Lower lobe of right lung (tissue), 2 donors: ENCODE measurements at regions of chr11 and their contacts with region 1.

Region 1: DNA sequence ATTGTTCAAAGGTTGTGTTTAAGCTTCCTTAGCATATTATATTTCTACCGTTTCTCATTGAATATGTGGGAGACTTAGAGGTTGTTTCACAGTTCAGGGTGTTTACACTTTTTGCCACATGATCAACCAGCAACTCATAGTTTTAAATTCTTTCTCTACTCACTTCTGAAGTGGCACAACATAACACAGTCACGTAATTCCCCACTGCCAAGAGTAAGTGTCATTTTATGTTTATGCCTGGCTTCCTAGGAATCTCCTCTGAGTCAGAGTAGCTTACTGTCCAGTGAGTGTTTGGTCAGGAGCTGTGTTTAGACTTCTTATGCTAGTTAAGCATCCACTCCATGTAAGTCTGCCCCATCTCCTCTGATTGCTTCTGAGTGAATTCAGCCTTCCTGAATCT is 520.8 kb upstream of the KIRREL3 start:
- DNase-seq: no peak
- ATAC-seq: no peak
- H3K4me3 ChIP-seq: no peak overlapping the region
- H3K27ac ChIP-seq: no peak overlapping the region
- H3K4me1 ChIP-seq: no peaks in the 10 kb centered on the region
- H3K27me3 ChIP-seq: no peaks in the 10 kb centered on the region
- CTCF ChIP-seq: no peak

Region 2: GRCh38 chr11:127461241-127462064 is 60.0 kb before region 1 on chr11:
- intact Hi-C with region 1: loop called (anchors 10 kb)
- DNase-seq: no peak
- ATAC-seq: no peak
- H3K4me3 ChIP-seq: no peak overlapping the region
- H3K27ac ChIP-seq: no peak overlapping the region
- H3K4me1 ChIP-seq: no peaks in the 10 kb centered on the region
- H3K27me3 ChIP-seq: no peaks in the 10 kb centered on the region
- CTCF ChIP-seq: no peak

Region 3: DNA sequence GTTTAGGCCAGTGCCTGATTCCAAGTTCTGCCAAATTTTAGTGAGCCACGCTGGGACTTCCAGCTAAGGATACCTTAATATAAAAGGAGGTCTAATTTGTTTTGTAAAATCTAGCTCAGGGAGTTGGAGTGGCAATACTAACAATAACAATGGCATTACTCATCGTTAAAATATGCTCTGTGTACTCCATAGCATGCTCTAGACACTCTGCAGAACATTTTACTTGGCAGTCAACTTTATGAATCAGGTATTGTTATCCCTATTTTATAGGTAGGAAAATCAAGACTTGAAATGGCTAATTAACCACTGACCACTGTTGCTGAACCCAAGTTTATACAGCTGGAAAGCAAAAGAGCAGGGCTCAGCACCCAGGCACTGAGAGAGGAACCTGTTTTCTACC is 35.9 kb before region 1 on chr11:
- intact Hi-C with region 1: no loop called
- DNase-seq: no peak
- ATAC-seq: no peak
- H3K4me3 ChIP-seq: no peak overlapping the region
- H3K27ac ChIP-seq: no peak overlapping the region
- H3K4me1 ChIP-seq: no peaks in the 10 kb centered on the region
- H3K27me3 ChIP-seq: no peaks in the 10 kb centered on the region
- CTCF ChIP-seq: no peak

Region 4: GRCh38 chr11:127552446-127552845 is 31.0 kb after region 1 on chr11:
- intact Hi-C with region 1: no loop called
- DNase-seq: no peak
- ATAC-seq: no peak
- H3K4me3 ChIP-seq: no peak overlapping the region
- H3K27ac ChIP-seq: no peak overlapping the region
- H3K4me1 ChIP-seq: no peaks in the 10 kb centered on the region
- H3K27me3 ChIP-seq: no peaks in the 10 kb centered on the region
- CTCF ChIP-seq: no peak

Region 5: GRCh38 chr11:127574478-127574877 is 53.1 kb after region 1 on chr11:
- intact Hi-C with region 1: no loop called
- DNase-seq: no peak
- ATAC-seq: no peak
- H3K4me3 ChIP-seq: no peak overlapping the region
- H3K27ac ChIP-seq: no peak overlapping the region
- H3K4me1 ChIP-seq: no peaks in the 10 kb centered on the region
- H3K27me3 ChIP-seq: no peaks in the 10 kb centered on the region
- CTCF ChIP-seq: no peak